CD8-positive, alpha-beta T cell (primary cell): ENCODE measurements at regions of chr6 and their contacts with region 1.

Region 1: GRCh38 chr6:42043787-42044475 is 6.4 kb upstream of the TAF8 start:
- DNase-seq: peak; percentile 82 to 97 (median 91)
- ATAC-seq: peak; percentile 30
- H3K4me3 ChIP-seq: peak overlapping the region; percentile 42 to 57
- H3K4me3 Mint-ChIP-seq: peak overlapping the region; percentile 81
- H3K27ac ChIP-seq: peak overlapping the region; percentile 41 to 55
- H3K27ac Mint-ChIP-seq: peak overlapping the region; percentile 95
- H3K4me1 ChIP-seq: peaks cover 65% of the 10 kb centered on the region
- H3K4me1 Mint-ChIP-seq: peaks cover 78% of the 10 kb centered on the region
- H3K27me3 ChIP-seq: no peaks in the 10 kb centered on the region
- H3K27me3 Mint-ChIP-seq: no peaks in the 10 kb centered on the region
- CTCF ChIP-seq: peak; percentile 84

Region 2: GRCh38 chr6:41787219-41787917 is 256.6 kb before region 1 on chr6 and contains the start of gene TOMM6:
- CTCF ChIA-PET with region 1: interaction called, 153 read pairs
- POLR2A ChIA-PET with region 1: interaction called, 48 read pairs
- intact Hi-C with region 1: loop called (anchors 1 kb)
- DNase-seq: peak; percentile 90 to 97 (median 96)
- ATAC-seq: peak; percentile 78
- H3K4me3 ChIP-seq: peak within 1 kb of the TSS; percentile 80 to 96
- H3K4me3 Mint-ChIP-seq: peak within 1 kb of the TSS; percentile 97
- H3K27ac ChIP-seq: peak within 1 kb of the TSS; percentile 89 to 94
- H3K27ac Mint-ChIP-seq: peak within 1 kb of the TSS; percentile 99
- H3K4me1 ChIP-seq: peaks cover 6% of the 10 kb centered on the region
- H3K4me1 Mint-ChIP-seq: peaks cover 15% of the 10 kb centered on the region
- H3K27me3 ChIP-seq: no peaks in the 10 kb centered on the region
- H3K27me3 Mint-ChIP-seq: no peaks in the 10 kb centered on the region
- CTCF ChIP-seq: peak; percentile 78
- total RNA-seq, gene TOMM6: 94.3 to 101 TPM

Region 3: DNA sequence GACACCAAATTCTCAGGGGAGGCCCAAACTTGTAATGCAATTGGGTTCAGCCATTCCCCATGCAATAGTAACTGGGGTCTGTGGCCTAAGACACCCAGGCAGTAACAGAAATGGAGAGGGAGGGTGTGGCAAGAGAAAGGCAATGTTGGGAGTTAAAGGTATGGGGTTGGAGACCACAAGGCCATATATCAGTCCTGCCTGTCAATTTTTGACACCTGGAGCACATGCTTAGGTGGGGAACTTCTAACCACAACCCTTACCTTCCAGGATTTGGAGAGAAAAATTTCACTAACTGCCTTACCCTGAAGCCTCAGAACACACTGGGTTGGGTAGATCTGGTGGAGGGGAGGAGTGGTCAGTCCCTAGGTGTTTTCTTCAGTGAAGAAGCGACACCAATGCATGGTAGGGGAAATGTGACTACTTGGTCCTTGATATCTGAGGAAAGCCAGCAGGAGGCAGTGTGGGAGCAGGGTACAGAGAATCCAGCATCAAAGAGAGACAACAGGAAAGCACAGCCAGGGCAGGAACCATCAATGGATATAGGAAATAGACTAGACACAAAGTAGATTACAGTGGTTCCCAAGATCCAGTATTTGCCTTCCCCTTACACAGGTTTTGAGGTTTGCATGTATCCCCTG is 141.9 kb before region 1 on chr6:
- CTCF ChIA-PET with region 1: interaction called, 135 read pairs
- POLR2A ChIA-PET with region 1: interaction called, 3 read pairs
- intact Hi-C with region 1: loop called (anchors 1 kb)
- DNase-seq: peak; percentile 25 to 81 (median 59)
- ATAC-seq: peak; percentile 71
- H3K4me3 ChIP-seq: no peak overlapping the region
- H3K4me3 Mint-ChIP-seq: no peak overlapping the region
- H3K27ac ChIP-seq: no peak overlapping the region
- H3K27ac Mint-ChIP-seq: no peak overlapping the region
- H3K4me1 ChIP-seq: peaks cover 11% of the 10 kb centered on the region
- H3K4me1 Mint-ChIP-seq: peaks cover 19% of the 10 kb centered on the region
- H3K27me3 ChIP-seq: no peaks in the 10 kb centered on the region
- H3K27me3 Mint-ChIP-seq: no peaks in the 10 kb centered on the region
- CTCF ChIP-seq: peak; percentile 42

Region 4: GRCh38 chr6:41936073-41936837 is 107.7 kb before region 1 on chr6:
- CTCF ChIA-PET with region 1: interaction called, 184 read pairs
- POLR2A ChIA-PET with region 1: interaction called, 58 read pairs
- intact Hi-C with region 1: loop called (anchors 1 kb)
- DNase-seq: peak; percentile 42 to 95 (median 71)
- ATAC-seq: peak; percentile 60
- H3K4me3 ChIP-seq: peak overlapping the region; percentile 9 to 13
- H3K4me3 Mint-ChIP-seq: peak overlapping the region; percentile 78
- H3K27ac ChIP-seq: peak overlapping the region; percentile 8 to 63
- H3K27ac Mint-ChIP-seq: peak overlapping the region; percentile 90
- H3K4me1 ChIP-seq: peaks cover 63% of the 10 kb centered on the region
- H3K4me1 Mint-ChIP-seq: peaks cover 72% of the 10 kb centered on the region
- H3K27me3 ChIP-seq: no peaks in the 10 kb centered on the region
- H3K27me3 Mint-ChIP-seq: no peaks in the 10 kb centered on the region
- CTCF ChIP-seq: peak; percentile 66

Region 5: DNA sequence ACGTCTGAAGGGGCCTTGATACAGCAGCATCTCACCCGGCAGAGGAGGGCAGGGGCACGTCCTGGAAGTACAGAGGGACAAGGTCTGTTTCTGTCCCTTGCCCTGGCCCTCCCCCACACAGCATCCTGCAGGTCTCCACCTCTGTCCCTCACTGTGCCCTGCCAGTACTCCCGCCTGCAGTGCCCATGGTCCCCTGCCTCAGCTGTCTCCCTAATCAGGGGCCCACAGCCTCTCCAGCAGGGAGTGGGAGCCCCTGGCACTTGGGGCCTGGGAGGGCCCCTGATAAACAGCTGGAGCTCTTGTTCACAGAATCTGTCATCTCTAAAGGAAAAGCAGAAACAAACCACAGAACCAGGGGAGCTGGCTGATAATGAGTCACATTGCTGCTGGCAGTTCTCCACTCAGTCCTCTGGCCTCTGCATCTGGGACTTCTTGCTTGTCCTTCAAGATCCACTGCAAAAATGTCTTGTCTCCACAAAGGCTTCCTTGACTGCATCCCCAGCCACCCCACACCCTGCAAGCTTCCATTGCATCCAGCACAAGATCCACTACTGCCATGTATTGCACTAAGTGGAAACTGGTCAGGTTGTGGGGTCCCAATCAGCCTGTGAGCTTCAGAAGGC is 26.8 kb before region 1 on chr6:
- CTCF ChIA-PET with region 1: interaction called, 12 read pairs
- POLR2A ChIA-PET with region 1: interaction called, 9 read pairs
- intact Hi-C with region 1: loop called (anchors 1 kb)
- DNase-seq: peak in 1 of 9 experiments; percentile 31
- ATAC-seq: peak; percentile 16
- H3K4me3 ChIP-seq: no peak overlapping the region
- H3K4me3 Mint-ChIP-seq: peak overlapping the region; percentile 19
- H3K27ac ChIP-seq: peak overlapping the region in 1 of 2 experiments; percentile 40
- H3K27ac Mint-ChIP-seq: peak overlapping the region; percentile 78
- H3K4me1 ChIP-seq: peaks cover 57% of the 10 kb centered on the region
- H3K4me1 Mint-ChIP-seq: peaks cover 68% of the 10 kb centered on the region
- H3K27me3 ChIP-seq: no peaks in the 10 kb centered on the region
- H3K27me3 Mint-ChIP-seq: no peaks in the 10 kb centered on the region
- CTCF ChIP-seq: no peak

Region 6: DNA sequence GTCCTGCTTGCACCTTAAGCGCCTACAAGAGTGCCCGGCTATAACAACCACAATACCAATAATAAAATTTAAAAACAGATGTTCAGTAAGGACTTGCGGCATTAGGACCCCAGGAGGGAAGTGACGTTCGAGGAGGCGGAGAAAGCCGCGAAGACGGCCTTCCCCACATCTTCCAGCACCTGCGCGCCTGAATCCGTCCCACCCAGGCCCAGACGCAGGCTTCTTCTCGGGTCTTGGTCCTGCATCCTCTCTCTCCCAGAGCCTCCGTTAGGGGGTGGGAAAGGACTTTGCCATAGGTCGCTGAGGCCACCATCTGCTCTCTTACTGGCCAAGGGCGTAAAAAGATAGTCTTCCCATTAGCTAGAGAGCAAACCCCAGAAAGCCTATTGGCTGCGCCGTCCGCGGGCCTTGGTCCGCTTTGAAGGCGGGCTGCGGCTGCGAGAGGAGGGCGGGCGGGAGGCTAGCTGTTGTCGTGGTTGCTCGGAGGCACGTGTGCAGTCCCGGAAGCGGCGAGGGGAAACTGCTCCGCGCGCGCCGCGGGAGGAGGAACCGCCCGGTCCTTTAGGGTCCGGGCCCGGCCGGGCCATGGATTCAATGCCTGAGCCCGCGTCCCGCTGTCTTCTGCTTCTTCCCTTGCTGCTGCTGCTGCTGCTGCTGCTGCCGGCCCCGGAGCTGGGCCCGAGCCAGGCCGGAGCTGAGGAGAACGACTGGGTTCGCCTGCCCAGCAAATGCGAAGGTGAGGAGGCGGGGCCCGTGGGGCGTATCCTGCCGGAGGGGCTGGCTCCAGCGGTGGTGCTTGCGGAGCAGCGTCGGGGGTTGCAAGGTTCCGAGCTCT is 885.3 kb after region 1 on chr6 and contains the start of gene CNPY3:
- CTCF ChIA-PET with region 1: no interaction called
- POLR2A ChIA-PET with region 1: no interaction called
- intact Hi-C with region 1: loop called in 1 of 2 experiments (anchors 2 kb)
- DNase-seq: peak; percentile 91 to 98 (median 94)
- ATAC-seq: peak; percentile 77
- H3K4me3 ChIP-seq: peak within 1 kb of the TSS; percentile 70 to 82
- H3K4me3 Mint-ChIP-seq: peak within 1 kb of the TSS; percentile 99
- H3K27ac ChIP-seq: peak within 1 kb of the TSS; percentile 93 to 95
- H3K27ac Mint-ChIP-seq: peak within 1 kb of the TSS; percentile 98
- H3K4me1 ChIP-seq: peaks cover 43% of the 10 kb centered on the region
- H3K4me1 Mint-ChIP-seq: peaks cover 45% of the 10 kb centered on the region
- H3K27me3 ChIP-seq: no peaks in the 10 kb centered on the region
- H3K27me3 Mint-ChIP-seq: no peaks in the 10 kb centered on the region
- CTCF ChIP-seq: no peak
- total RNA-seq, gene CNPY3: 43.9 to 47.4 TPM